ENCODE measurements at regions of chr9 and their contacts with region 1.

Region 1: GRCh38 chr9:3809724-3810123 is 283.9 kb upstream of the RFX3 start:
- DNase-seq: no peak
- H3K4me3 ChIP-seq: no peak overlapping the region
- H3K27ac ChIP-seq: no peak overlapping the region
- H3K4me1 ChIP-seq: no peaks in the 10 kb centered on the region
- H3K27me3 ChIP-seq: no peaks in the 10 kb centered on the region
- CTCF ChIP-seq: no peak
- EP300 ChIP-seq: no peak
- POLR2A ChIP-seq: no peak

Region 2: DNA sequence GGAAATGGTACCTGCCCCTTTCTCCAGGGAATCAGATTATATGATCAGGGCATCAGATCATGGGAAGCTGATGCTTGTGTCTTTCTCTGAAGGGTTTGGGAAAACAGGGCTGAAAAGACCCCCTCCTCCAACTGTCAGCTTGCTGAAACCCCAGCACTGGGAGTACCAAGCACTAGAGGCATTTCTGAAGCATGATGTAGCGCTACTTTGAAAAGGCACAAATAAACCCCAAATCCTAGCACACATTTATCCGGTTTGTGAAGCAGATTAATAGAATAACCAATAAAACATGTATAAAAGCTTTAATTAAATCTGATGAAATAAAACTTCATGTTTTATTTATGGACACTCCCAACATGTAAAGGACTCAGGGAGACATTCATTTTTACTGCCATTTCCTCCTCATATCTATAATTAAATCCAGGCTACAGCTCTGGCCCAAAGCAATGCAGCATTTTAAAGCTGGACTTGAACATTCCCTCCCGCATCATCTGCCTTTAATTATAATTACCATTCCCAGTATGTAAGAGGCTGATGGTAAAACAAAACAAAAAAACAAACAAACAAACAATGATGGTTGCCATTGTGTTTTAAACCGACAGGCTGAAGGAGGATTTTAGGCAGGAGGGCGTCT is 14.2 kb after region 1 on chr9:
- in situ Hi-C with region 1: no loop called
- intact Hi-C with region 1: loop called (anchors 1 kb)
- DNase-seq: no peak
- H3K4me3 ChIP-seq: no peak overlapping the region
- H3K27ac ChIP-seq: no peak overlapping the region
- H3K4me1 ChIP-seq: peaks cover 0 to 8% (median 3%) of the 10 kb centered on the region in 4 donors
- H3K27me3 ChIP-seq: no peaks in the 10 kb centered on the region
- CTCF ChIP-seq: no peak
- EP300 ChIP-seq: no peak
- POLR2A ChIP-seq: no peak

Region 3: GRCh38 chr9:3936520-3937235 is 127.0 kb after region 1 on chr9:
- in situ Hi-C with region 1: no loop called
- intact Hi-C with region 1: no loop called
- DNase-seq: no peak
- H3K4me3 ChIP-seq: no peak overlapping the region
- H3K27ac ChIP-seq: no peak overlapping the region
- H3K4me1 ChIP-seq: no peaks in the 10 kb centered on the region
- H3K27me3 ChIP-seq: no peaks in the 10 kb centered on the region
- CTCF ChIP-seq: no peak
- EP300 ChIP-seq: no peak
- POLR2A ChIP-seq: no peak